ENCODE measurements at regions of chr16 and their contacts with region 1.

Region 1: DNA sequence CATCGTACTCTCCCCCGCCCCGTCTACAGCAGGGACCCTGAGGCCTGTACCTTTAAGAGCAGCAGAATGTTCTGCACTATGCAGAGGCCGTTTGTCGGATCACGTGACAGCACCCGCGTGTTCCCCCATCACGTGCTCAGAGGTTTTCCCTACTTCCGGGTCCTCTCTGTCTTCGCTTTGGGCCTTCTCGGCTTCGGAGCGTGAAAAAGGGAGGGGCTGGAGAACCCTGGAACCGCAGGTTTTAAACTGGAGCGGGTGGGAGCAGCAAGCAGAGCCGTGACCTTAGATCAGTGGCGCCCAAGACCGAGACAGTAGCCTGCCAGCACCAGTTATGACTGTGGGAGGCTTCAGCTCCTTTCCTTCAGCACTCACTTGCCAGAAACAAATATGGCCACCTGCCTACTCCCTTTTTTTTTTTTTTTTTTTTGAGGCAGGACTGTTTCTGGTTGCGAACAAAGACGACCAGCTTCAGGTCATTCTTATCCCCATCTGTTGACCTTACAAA is at the start of gene CLN3:
- DNase-seq: peak; percentile 94
- H3K4me3 Mint-ChIP-seq: peak within 1 kb of the TSS; percentile 91
- H3K27ac Mint-ChIP-seq: peak within 1 kb of the TSS; percentile 100
- H3K4me1 Mint-ChIP-seq: no peaks in the 10 kb centered on the region
- H3K27me3 Mint-ChIP-seq: peaks cover 13% of the 10 kb centered on the region
- CTCF ChIP-seq: no peak
- total RNA-seq, gene CLN3: 18.1 and 19.7 TPM in 2 replicates

Region 2: DNA sequence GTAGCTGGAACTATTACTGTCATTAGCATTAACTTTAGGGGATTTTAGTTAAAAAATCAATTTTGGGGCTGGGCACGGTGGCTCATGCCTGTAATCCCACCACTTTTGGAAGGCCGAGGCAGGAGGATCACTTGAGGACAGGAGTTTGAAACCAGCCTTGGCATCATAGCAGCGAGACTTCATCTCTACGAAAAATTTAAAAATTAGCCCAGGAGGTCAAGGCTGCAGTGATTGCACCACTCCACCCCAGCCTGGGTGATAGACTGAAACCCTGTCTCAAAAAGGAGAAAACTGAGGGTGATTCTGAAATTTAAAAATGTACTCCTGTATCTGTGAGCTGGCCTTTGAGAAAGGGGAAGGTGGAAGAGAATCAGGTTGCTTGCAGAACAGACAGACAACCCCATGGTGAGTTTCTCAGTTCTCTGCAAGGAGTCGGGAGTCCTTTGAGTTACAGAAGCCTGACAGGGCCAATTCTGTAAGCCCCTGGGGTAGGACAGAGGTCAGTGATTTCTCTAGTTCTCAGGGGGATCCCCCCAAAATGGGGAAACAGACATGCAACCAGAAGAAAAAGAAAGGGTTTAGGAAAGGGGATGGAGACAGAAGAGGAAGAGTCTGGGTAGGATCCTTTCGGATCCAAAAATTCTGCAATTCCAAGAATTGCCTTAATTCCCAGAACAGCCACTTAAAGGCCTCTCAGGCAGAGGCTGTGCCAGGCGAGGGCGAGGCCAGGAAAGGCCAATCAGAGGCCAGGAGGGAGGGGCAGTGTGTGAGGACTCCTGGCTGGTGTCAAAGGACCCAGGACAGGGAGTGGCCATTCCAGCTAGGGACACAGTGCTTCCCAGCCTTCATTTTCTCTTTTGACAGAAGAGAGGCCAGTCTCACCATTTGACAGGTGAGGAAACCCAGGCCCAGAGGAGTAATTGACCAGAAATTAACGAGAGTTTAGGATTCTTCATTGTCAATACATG is 40.0 kb after region 1 on chr16:
- CTCF ChIA-PET with region 1: interaction called, 6 read pairs
- POLR2A ChIA-PET with region 1: interaction called, 53 read pairs
- intact Hi-C with region 1: no loop called
- DNase-seq: peak; percentile 66
- H3K4me3 Mint-ChIP-seq: no peak overlapping the region
- H3K27ac Mint-ChIP-seq: peak overlapping the region; percentile 96
- H3K4me1 Mint-ChIP-seq: peaks cover 35% of the 10 kb centered on the region
- H3K27me3 Mint-ChIP-seq: no peaks in the 10 kb centered on the region
- CTCF ChIP-seq: no peak

Region 3: DNA sequence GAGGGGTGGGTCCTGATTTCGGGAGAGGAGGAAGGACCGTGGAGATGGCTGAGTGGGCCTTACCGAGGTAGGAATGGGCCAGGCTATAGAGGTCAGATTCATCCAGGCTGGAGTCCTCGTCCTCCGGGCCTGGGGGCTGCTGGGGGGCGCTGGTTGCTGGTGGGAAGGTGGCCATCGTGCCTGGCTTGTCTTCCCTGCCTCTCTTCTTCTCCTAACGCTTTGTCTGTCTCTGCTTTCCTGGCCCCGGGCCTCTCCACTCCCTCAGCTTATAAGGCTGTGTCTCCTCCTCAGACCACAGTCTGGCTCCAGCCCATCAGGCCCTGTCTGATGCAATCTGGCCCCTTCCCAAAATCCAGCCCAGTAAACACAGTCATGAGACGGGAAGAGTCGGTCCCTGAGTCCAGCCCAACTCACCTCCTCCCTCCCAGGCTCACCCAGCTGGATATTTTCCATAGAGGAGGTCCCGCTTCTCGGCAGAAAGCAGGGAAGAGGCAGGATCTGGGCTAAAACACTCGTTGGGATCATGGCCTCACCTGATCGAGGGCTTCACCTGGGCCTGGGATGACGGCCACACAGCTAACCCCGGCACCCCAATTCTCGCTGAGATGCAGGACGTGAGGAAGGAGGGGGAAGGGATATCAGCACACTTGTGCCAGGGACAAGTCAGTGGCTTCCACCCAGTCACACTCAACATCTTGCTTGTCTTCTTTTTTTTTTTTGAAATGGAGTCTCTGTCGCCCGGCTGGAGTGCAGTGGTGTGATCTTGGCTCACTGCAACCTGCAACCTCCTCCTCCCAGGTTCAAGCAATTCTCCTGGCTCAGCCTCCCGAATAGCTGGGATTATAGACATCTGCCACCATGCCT is 46.9 kb after region 1 on chr16 and contains the start of gene NUPR1:
- CTCF ChIA-PET with region 1: interaction called, 6 read pairs
- POLR2A ChIA-PET with region 1: interaction called, 53 read pairs
- intact Hi-C with region 1: no loop called
- DNase-seq: peak; percentile 99
- H3K4me3 Mint-ChIP-seq: peak within 1 kb of the TSS; percentile 79
- H3K27ac Mint-ChIP-seq: peak within 1 kb of the TSS; percentile 96
- H3K4me1 Mint-ChIP-seq: peaks cover 39% of the 10 kb centered on the region
- H3K27me3 Mint-ChIP-seq: no peaks in the 10 kb centered on the region
- CTCF ChIP-seq: no peak
- total RNA-seq, gene NUPR1: 291 and 345 TPM in 2 replicates